CD4-positive, alpha-beta T cell (primary cell): ENCODE measurements at regions of chr14 and their contacts with region 1.

Region 1: GRCh38 chr14:73633116-73634010 is 11.4 kb upstream of the DNAL1 start:
- DNase-seq: peak; percentile 33 to 78 (median 48)
- ATAC-seq: peak; percentile 85
- H3K4me3 ChIP-seq: peak overlapping the region; percentile 57
- H3K4me3 Mint-ChIP-seq: peak overlapping the region; percentile 83
- H3K27ac ChIP-seq: no peak overlapping the region
- H3K27ac Mint-ChIP-seq: no peak overlapping the region
- H3K4me1 ChIP-seq: peaks cover 14% of the 10 kb centered on the region
- H3K4me1 Mint-ChIP-seq: peaks cover 5% of the 10 kb centered on the region
- H3K27me3 ChIP-seq: peaks cover 0 to 10% of the 10 kb centered on the region in 2 experiments
- H3K27me3 Mint-ChIP-seq: peaks cover 10% of the 10 kb centered on the region
- CTCF ChIP-seq: peak; percentile 80

Region 2: GRCh38 chr14:73173092-73173735 is 460.1 kb before region 1 on chr14:
- CTCF ChIA-PET with region 1: no interaction called
- POLR2A ChIA-PET with region 1: no interaction called
- intact Hi-C with region 1: loop called in 1 of 2 experiments (anchors 1 kb)
- DNase-seq: peak in 3 of 14 experiments; percentile 37 to 54 (median 47)
- ATAC-seq: peak; percentile 54
- H3K4me3 ChIP-seq: no peak overlapping the region
- H3K4me3 Mint-ChIP-seq: no peak overlapping the region
- H3K27ac ChIP-seq: no peak overlapping the region
- H3K27ac Mint-ChIP-seq: no peak overlapping the region
- H3K4me1 ChIP-seq: no peaks in the 10 kb centered on the region
- H3K4me1 Mint-ChIP-seq: no peaks in the 10 kb centered on the region
- H3K27me3 ChIP-seq: no peaks in the 10 kb centered on the region
- H3K27me3 Mint-ChIP-seq: no peaks in the 10 kb centered on the region
- CTCF ChIP-seq: peak; percentile 38

Region 3: DNA sequence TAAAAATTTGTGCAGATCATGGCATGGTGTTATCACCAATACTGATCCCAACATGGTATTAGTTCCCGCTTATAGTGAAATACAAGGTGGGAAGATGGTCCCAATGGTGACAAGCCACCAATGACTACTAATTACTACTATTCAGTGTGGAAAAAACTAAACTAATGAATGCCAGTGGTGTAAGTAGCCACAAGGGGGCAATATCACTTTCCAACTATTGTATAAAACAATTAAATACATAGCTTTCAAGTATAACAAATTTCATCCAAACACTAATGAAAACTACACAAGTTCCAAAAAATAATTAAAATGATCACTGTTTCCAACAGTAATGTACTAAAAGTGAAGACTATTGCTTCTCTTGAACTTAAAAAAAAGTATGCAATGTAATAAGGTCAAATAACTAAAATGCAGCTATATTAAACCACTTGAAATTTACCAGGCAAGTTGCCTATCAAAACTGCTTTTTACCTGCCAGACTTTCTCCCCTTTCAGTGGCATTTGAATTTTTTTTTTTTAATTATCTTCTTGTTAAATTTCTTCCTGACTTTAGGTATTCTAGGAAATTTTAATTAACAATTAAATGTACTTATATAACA is 338.1 kb before region 1 on chr14:
- CTCF ChIA-PET with region 1: interaction called, 3 read pairs
- POLR2A ChIA-PET with region 1: no interaction called
- intact Hi-C with region 1: loop called in 1 of 2 experiments (anchors 5 kb)
- DNase-seq: peak in 4 of 14 experiments; percentile 21 to 64 (median 55)
- ATAC-seq: peak; percentile 48
- H3K4me3 ChIP-seq: no peak overlapping the region
- H3K4me3 Mint-ChIP-seq: no peak overlapping the region
- H3K27ac ChIP-seq: no peak overlapping the region
- H3K27ac Mint-ChIP-seq: no peak overlapping the region
- H3K4me1 ChIP-seq: no peaks in the 10 kb centered on the region
- H3K4me1 Mint-ChIP-seq: no peaks in the 10 kb centered on the region
- H3K27me3 ChIP-seq: no peaks in the 10 kb centered on the region
- H3K27me3 Mint-ChIP-seq: no peaks in the 10 kb centered on the region
- CTCF ChIP-seq: peak; percentile 78

Region 4: GRCh38 chr14:73503648-73504047 is 129.7 kb before region 1 on chr14:
- CTCF ChIA-PET with region 1: interaction called, 10 read pairs
- POLR2A ChIA-PET with region 1: interaction called, 4 read pairs
- intact Hi-C with region 1: loop called (anchors 1 kb)
- DNase-seq: peak in 1 of 14 experiments; percentile 42
- ATAC-seq: no peak
- H3K4me3 ChIP-seq: no peak overlapping the region
- H3K4me3 Mint-ChIP-seq: no peak overlapping the region
- H3K27ac ChIP-seq: no peak overlapping the region
- H3K27ac Mint-ChIP-seq: no peak overlapping the region
- H3K4me1 ChIP-seq: no peaks in the 10 kb centered on the region
- H3K4me1 Mint-ChIP-seq: no peaks in the 10 kb centered on the region
- H3K27me3 ChIP-seq: no peaks in the 10 kb centered on the region
- H3K27me3 Mint-ChIP-seq: no peaks in the 10 kb centered on the region
- CTCF ChIP-seq: no peak